Breast epithelium (tissue), 4 donors: ENCODE measurements at regions of chr16 and their contacts with region 1.

Region 1: GRCh38 chr16:61057635-61058034 is 978.6 kb downstream of the CDH8 start:
- DNase-seq: no peak
- H3K4me3 ChIP-seq: no peak overlapping the region
- H3K27ac ChIP-seq: no peak overlapping the region
- H3K4me1 ChIP-seq: no peaks in the 10 kb centered on the region
- H3K27me3 ChIP-seq: no peaks in the 10 kb centered on the region
- CTCF ChIP-seq: no peak
- POLR2A ChIP-seq: no peak

Region 2: DNA sequence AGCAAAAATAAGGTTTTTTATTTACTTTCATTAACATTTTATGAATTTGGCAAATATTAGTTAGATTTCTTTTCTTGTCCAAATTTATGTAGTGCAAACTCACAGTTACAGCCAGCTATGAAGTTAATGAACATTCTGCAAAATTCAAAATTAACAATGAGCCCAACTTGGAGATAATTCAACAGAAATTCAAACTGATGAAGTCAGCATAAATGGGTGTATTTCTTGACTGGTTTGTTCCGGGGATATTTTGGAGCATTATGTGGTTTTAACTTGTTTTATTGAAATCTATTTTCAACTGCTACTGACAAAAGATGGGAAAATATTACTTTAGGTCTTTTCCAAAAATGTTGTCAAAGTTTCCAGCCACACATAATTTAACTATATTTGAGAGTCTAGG is 170.7 kb after region 1 on chr16:
- intact Hi-C with region 1: loop called (anchors 5 kb)
- DNase-seq: no peak
- H3K4me3 ChIP-seq: no peak overlapping the region
- H3K27ac ChIP-seq: no peak overlapping the region
- H3K4me1 ChIP-seq: no peaks in the 10 kb centered on the region
- H3K27me3 ChIP-seq: no peaks in the 10 kb centered on the region
- CTCF ChIP-seq: no peak
- POLR2A ChIP-seq: no peak